ENCODE measurements at regions of chr10 and their contacts with region 1.

Region 1: DNA sequence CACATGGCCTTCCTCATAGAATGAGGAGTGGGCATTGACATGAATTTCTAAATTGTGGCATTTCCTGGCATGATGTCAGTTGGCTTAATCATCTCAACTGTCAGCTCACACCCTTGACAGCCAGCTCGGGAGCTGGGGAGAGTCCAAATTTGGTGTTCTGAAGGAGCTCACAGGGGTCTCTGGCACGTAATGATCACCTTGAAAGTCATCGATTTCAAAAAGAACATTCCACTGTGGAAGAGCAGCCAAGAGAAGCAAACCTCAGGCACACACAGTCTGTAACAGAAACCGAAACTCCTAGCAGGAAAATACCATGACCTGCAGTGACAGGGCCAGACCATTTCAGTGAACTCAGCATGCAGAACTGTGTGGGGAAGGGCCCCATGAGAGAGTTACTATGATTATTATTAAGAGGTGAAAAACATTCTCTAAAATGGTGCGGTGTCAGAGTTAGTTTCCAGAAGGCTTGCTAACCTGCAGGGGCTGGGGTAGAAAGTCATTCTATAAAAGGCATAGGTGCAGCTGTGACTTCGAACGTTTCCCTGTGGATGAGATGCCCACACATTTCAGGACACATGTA is 26.4 kb upstream of the KLF6 start:
- DNase-seq: peak; percentile 89
- H3K4me3 Mint-ChIP-seq: peak overlapping the region; percentile 61
- H3K27ac Mint-ChIP-seq: peak overlapping the region; percentile 100
- H3K4me1 Mint-ChIP-seq: peaks cover 51% of the 10 kb centered on the region
- H3K27me3 Mint-ChIP-seq: no peaks in the 10 kb centered on the region
- CTCF ChIP-seq: no peak

Region 2: GRCh38 chr10:3763035-3763456 is 48.3 kb before region 1 on chr10:
- CTCF ChIA-PET with region 1: no interaction called
- POLR2A ChIA-PET with region 1: interaction called, 13 read pairs
- intact Hi-C with region 1: no loop called
- DNase-seq: peak; percentile 97
- H3K4me3 Mint-ChIP-seq: peak overlapping the region; percentile 75
- H3K27ac Mint-ChIP-seq: peak overlapping the region; percentile 84
- H3K4me1 Mint-ChIP-seq: peaks cover 40% of the 10 kb centered on the region
- H3K27me3 Mint-ChIP-seq: no peaks in the 10 kb centered on the region
- CTCF ChIP-seq: no peak

Region 3: GRCh38 chr10:3887885-3888476 is 76.6 kb after region 1 on chr10:
- CTCF ChIA-PET with region 1: no interaction called
- POLR2A ChIA-PET with region 1: interaction called, 11 read pairs
- intact Hi-C with region 1: loop called (anchors 1 kb)
- DNase-seq: peak; percentile 77
- H3K4me3 Mint-ChIP-seq: no peak overlapping the region
- H3K27ac Mint-ChIP-seq: peak overlapping the region; percentile 81
- H3K4me1 Mint-ChIP-seq: peaks cover 32% of the 10 kb centered on the region
- H3K27me3 Mint-ChIP-seq: no peaks in the 10 kb centered on the region
- CTCF ChIP-seq: no peak

Region 4: DNA sequence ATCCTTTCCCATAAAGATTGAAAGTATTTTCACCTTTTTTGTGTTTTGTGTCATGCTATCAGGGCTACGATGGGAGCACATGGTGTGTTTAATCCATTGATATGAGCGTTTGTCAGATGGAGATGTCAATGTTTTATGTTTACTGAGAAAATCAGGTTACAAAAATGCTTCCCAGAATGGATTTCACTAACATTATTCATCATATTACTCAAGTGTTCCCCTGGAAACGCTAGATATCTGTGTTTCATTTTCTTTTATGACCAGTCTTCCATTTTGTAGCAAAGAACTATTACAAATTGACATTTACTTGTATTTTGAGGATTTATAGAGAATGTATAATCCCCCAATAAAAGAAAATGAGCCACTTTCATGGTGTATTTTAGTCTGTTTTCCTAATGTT is 721.1 kb after region 1 on chr10:
- CTCF ChIA-PET with region 1: no interaction called
- POLR2A ChIA-PET with region 1: interaction called, 10 read pairs
- intact Hi-C with region 1: no loop called
- DNase-seq: peak; percentile 41
- H3K4me3 Mint-ChIP-seq: peak overlapping the region; percentile 6
- H3K27ac Mint-ChIP-seq: peak overlapping the region; percentile 87
- H3K4me1 Mint-ChIP-seq: peaks cover 17% of the 10 kb centered on the region
- H3K27me3 Mint-ChIP-seq: no peaks in the 10 kb centered on the region
- CTCF ChIP-seq: no peak

Region 5: DNA sequence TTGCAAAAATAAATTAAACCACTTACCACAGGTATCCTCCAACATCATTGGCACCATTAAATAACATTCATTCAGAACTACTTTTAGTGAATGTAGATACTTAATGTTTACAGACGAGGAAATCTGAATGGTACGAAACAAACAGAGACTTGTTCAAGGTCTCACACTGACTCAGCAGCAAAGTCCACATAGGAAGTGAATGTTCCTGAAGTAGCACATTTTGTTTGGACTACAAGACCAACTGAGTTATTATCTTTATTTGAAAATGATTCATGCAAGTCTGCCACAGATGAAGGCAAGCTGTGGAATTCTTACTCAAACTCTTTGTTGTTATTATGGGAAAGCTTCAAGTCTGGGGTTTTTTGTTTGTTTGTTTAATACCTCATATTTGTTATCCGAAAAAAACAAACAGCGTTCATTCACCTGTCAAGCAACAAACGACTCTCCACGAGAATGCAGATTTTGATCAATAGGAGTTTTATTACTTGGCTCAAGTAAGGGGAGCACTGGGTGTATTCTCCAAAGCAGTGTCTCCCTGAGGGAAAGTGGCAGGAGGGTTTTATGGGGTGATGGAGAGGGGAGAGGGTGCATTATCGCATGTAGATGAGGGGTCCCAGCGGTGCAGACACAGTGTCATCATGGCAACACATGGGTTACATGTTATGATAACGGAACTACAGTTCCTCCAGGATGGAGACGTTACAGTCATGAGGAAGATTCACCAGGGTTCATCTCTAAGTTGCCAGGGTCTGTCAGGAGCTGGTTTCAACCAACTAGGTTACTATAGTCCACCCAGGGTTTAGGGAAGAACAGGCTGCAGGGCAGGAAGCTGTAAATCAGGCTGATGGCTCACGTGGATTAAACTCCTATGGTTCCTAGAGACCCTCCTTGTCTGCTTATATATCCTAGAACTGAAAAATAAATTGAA is 866.9 kb after region 1 on chr10:
- CTCF ChIA-PET with region 1: no interaction called
- POLR2A ChIA-PET with region 1: interaction called, 16 read pairs
- intact Hi-C with region 1: no loop called
- DNase-seq: peak; percentile 81
- H3K4me3 Mint-ChIP-seq: peak overlapping the region; percentile 58
- H3K27ac Mint-ChIP-seq: peak overlapping the region; percentile 90
- H3K4me1 Mint-ChIP-seq: peaks cover 33% of the 10 kb centered on the region
- H3K27me3 Mint-ChIP-seq: no peaks in the 10 kb centered on the region
- CTCF ChIP-seq: no peak